Left lung (tissue), 14 donors: ENCODE measurements at regions of chr12 and their contacts with region 1.

Region 1: DNA sequence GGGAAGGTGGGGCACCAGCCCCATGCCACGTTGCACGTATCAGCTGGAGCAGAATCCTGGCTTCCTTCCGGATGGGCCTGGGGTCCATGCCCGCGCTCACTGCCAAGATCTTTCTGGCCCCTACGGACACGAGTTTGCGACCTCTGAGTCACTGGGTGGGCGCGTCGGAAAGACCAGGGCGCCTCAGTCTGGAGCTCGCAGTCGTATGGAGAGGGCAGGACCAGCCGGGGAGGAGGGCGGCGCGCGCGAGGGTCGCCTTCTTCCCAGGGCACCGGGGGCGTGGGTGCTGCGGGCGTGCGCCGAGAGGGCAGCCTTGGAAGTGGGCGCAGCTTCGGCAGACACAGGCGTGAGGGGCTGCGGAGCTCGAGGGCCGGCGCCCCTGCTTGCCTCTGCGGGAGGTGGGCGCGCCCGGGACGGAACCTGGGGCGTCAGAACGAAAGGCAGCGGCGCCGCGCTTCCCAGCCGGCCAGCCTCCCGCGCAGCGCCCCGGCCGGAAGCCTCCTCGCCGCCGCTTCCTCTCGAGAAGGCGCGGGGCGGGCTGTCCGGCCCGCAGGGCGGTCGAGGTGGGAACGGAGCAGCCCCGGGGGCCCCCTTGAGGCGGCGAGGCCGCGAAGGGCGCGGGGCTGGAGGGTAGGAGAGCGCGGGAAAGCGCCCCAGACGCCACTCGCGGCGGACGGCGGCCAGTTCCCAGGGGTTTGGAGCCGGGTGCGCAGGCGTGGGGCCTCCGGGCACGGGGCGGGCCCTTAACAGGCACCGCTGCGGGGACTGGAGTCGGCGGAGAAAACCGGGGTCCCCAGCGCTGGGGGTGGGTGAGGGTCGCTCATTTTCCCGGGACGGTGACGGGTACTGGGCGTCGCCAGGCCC is at the start of gene ARL6IP4:
- DNase-seq: peak; percentile 61 to 94 (median 69)
- ATAC-seq: peak; percentile 82
- H3K4me3 ChIP-seq: peak within 1 kb of the TSS; percentile 99
- H3K27ac ChIP-seq: peak within 1 kb of the TSS; percentile 84 to 91
- H3K4me1 ChIP-seq: peaks cover 57 to 87% of the 10 kb centered on the region in 2 donors
- H3K27me3 ChIP-seq: no peaks in the 10 kb centered on the region
- CTCF ChIP-seq: no peak
- polyA plus RNA-seq, gene ARL6IP4: 146 to 198 (median 170) TPM

Region 2: DNA sequence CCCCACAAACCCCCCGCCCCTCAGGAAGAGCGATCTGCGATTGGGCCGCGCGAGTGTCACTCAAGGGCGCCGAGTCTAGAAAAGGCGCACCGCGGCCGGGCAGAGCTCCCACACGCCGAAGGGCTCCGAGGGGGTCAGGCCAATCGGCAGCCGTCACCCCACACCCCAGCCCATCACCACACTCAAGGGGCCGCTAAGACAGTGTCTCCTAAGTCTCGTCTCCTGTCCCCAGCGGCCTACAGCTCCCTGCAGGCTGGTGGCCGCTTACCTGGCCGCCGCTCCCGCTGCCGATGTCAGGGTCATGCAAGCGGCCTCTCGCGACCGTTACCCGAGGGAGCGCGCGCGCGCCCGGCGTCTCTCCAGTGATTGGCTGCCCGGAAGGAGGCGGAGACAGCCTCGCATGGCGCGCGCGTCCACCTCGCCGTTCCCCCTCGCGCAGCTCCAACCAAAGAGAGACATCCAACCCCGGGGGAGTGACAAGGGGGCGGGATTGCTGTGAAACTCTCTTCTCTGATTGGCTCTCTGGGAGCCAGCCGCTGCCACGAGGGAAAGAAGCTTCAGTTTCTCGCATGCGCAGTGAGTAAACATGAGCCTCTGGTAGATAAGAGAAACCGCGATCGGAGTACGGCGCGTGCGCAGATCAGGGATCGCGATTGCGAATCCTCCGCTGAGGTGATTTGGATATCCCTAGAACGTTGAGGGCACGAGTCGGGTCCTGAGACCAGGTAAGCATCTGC is 252.6 kb after region 1 on chr12 and contains the starts of genes MPHOSPH9 and MTRFR:
- intact Hi-C with region 1: loop called in 1 of 2 experiments (anchors 5 kb)
- DNase-seq: peak; percentile 98 to 100 (median 99)
- ATAC-seq: peak; percentile 97
- H3K4me3 ChIP-seq: peak within 1 kb of the TSS; percentile 73 to 95
- H3K27ac ChIP-seq: peak within 1 kb of the TSS; percentile 88
- H3K4me1 ChIP-seq: peaks cover 28 to 73% of the 10 kb centered on the region in 2 donors
- H3K27me3 ChIP-seq: no peaks in the 10 kb centered on the region
- CTCF ChIP-seq: no peak
- polyA plus RNA-seq, gene MPHOSPH9: 33.9 to 46.7 (median 37.7) TPM
- polyA plus RNA-seq, gene MTRFR: 24.4 to 28.5 (median 26.8) TPM